Posterior vena cava (tissue), 2 donors: ENCODE measurements at regions of chr17 and their contacts with region 1.

Region 1: GRCh38 chr17:42819944-42820535 is 4.0 kb downstream of the BECN1 start:
- DNase-seq: no peak

Region 2: DNA sequence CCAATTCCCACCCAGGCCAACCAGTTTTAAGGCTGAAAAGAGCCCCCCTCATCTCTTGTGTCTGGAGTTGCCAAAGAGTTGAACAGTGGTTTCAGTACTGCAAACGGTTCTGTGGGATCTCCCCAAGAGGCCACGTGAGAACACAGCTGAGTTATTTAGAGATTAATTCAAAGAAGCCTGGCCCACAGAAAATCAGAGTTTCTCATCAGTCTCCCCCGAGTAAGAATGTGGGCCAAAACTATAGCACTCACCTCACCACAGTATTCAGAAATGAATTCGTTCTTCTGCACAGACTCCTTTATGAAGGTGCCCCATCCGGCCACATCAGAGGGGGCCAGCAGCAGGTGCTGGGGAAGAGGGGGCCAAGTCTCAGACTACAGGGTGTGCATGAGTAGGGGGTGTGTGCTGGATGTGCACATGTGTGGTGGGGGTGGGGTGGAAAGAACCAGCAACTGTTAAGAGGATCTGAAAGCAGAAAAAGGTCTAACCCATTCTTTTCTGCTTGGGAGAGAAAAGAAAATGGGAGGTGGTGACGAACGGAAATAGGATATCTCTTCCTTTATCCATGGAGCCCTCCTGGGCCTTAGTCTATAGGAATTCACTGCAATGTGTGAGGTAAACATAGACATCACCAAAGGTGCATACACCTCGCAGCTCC is 115.1 kb before region 1 on chr17:
- intact Hi-C with region 1: loop called in 1 of 2 experiments (anchors 10 kb)
- DNase-seq: no peak

Region 3: DNA sequence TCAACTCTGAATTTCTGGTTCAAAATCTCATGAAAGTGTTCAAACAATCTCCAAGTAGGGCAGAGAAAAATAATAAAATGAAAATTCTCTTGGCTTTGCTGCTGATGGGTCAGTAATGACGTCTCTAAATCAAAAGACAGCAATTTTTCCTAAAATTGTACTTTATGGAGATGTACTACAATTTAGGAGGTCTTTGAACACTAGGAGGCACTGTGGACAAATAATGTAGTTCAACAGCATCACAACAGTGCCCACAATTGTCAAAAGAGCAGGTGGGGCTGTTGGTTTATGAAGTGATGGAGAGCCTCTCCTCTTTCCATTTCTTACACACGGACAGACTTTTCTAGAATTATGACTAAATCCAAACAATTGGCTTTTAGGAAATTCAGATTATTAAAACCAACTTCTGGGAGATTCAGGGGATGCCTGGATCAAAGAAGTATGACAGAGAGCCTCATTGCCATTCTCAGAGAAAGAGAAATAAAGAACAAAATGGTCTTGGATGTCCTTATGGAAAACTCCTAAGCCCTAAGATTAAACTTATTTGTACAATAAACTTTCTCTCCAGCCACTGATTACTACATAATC is 99.0 kb before region 1 on chr17:
- intact Hi-C with region 1: loop called in 1 of 2 experiments (anchors 10 kb)
- DNase-seq: no peak

Region 4: DNA sequence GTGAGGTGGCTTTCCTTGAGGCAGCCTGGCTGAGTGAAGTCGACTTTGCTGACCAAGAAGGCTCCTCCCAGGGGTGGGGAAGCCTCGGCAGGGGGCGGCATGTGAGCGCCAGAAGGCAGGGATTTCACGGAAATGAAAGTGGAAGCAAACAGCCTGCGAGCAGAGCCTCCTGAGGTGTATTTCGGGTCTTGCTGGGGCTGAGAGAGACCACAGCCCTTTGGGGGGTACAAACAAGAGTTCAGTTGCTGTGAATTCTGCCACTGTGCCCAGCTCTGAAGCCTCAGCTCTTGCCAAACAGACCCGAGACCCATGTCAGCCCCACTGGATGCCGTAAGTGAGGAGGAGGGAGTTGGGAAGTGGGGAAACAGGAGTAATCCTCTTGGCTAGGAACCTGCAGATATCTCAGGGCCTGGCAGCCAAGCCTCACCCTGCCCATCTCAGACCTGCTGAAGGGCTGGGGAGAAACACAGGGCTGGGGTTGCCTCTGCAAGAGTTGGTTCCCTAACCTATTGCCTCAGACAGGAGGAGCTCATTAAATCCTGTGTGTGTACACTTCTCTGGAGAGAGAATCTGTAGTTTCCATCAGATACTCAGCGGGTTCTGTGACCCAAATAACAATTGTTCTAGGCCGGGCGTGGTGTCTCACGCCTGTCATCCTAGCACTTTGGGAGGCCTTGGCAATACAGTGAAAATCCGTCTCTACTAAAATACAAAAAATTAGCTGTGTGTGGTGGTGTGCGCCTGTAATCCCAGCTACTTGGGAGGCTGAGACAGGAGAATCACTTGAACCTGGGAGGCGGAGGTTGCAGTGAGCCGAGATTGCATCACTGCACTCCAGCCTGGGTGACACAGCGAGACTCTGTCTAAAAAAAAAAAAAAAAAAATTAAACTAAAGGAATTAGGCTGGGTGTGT is 186.9 kb after region 1 on chr17 and contains the start of gene IFI35:
- intact Hi-C with region 1: no loop called
- DNase-seq: peak; percentile 95
- total RNA-seq, gene IFI35: 23.9 to 24.1 TPM